A549 (cell line): ENCODE measurements at regions of chr15 and their contacts with region 1.

Region 1: DNA sequence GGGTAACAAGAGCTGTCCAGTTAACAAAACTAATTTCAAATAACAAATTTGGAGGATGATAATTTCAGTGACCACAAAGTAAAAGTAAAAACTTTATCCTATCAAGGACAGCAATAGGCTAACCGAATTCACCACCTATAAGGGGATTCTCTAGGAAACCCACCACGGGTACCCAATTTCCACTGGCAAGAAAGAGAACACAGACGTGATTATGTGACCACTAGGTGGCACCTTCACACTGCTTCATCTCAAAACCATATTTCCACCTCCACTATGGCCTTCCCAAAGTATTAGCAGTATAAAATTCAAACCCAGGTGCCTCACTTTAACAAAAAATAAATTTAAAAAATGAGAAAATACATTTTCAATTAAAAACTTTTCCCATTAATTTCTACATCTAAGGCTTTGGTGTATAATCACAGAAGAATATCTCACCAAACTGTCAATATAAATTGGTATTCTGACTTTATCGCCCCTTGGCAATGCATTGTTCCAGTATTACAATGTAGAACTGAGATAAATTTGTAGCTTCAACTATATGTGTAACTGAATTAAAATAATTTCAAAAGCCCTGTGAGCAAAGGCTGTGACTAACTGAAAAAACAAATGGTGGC is 96.5 kb downstream of the FSIP1 start:
- DNase-seq: peak; percentile 4 to 56
- ATAC-seq: peak in 1 of 2 experiments; percentile 72; a peak in 2 of 6 replicates
- H3K4me3 ChIP-seq: no peak overlapping the region
- H3K27ac ChIP-seq: no peak overlapping the region
- H3K4me1 ChIP-seq: no peaks in the 10 kb centered on the region
- CTCF ChIP-seq: peak; percentile 80
- EP300 ChIP-seq: no peak
- POLR2A ChIP-seq: no peak
- RAD21 ChIP-seq: peak; percentile 81 to 90

Region 2: DNA sequence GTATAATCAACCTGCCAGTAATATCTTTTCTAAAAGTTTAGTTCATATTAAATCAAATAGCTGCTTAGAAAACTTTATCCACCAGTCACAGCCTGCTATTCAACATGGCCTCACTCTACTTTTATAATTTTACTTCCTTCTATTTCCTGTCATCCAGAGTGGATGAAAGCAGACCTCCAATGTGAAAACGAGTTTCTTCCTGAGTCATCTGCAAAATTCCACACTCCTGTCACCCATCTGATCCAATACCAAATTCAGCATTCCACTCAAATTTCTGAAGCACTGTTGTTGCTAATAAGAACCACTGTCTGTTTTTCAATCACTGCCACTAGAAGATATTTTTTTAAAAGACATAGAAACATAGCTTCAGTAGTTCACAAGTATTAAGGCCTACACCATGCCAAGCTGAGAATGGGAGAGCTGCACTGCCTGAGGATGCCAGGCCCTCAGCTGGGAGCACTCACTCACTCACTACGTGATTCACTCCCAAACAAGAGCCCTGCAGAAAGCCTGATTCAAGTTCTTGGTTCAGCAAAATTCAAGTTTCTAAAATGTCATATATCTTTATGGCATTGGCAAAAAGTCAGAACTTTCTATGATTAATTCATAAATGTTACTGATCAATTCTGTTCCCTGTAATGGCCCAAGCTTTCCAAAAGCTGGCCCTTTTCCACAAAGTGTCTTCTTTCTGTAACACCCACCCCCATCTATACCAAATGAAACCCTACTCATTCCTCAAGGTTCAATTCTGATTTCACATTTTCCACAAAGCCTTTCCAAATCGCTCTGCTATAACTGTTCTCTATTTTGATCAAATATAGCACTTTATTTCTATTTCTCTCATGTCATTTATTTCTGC is 13.6 kb after region 1 on chr15:
- CTCF ChIA-PET with region 1: interaction called, 14 read pairs
- POLR2A ChIA-PET with region 1: no interaction called
- DNase-seq: no peak
- ATAC-seq: no peak
- H3K4me3 ChIP-seq: no peak overlapping the region
- H3K27ac ChIP-seq: no peak overlapping the region
- H3K4me1 ChIP-seq: no peaks in the 10 kb centered on the region
- CTCF ChIP-seq: no peak
- EP300 ChIP-seq: no peak
- POLR2A ChIP-seq: no peak
- RAD21 ChIP-seq: no peak

Region 3: DNA sequence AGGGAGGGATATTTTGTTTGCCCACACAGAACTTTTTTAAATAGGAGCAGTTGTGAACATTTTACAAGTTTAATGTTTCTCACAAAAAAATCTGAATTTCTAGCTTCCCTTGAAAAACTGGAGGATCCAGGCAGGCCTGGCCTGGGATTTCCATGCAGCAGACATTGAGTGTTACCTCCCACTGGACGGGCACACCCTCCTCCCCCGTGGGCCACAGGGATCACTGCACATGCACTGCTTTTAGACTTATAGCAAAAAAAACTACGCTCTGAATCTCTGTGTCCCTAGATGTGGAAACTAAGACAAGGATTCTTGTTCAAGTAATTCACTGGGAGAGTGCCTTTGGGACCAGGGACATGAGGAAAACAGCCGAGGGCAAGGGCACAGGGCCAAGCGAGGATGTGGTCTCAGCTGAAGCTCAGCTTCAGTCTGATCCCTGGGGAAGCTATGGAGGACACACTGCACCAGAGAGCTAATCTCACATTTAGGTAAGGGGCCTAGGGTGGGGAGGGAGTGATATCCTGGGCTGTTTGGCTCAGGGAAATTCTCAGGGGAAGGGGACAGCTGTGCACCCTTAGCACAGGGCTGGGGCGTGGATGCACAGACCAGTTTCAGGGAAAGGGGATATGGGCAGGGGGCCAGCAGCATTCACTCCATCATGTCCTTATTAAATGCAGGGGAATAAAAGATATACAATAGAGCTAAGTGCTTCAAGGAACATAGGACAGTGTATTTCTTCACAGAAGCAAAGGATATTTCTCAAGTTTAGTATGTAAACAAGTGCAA is 50.5 kb after region 1 on chr15:
- CTCF ChIA-PET with region 1: interaction called, 11 read pairs
- POLR2A ChIA-PET with region 1: no interaction called
- DNase-seq: no peak
- ATAC-seq: no peak
- H3K4me3 ChIP-seq: no peak overlapping the region
- H3K27ac ChIP-seq: peak overlapping the region in 1 of 2 experiments; percentile 50; a peak in 1 of 6 replicates
- H3K4me1 ChIP-seq: peaks cover 8% of the 10 kb centered on the region; the same call in 2 of the 3 replicates
- CTCF ChIP-seq: no peak
- EP300 ChIP-seq: no peak
- POLR2A ChIP-seq: no peak
- RAD21 ChIP-seq: no peak

Region 4: DNA sequence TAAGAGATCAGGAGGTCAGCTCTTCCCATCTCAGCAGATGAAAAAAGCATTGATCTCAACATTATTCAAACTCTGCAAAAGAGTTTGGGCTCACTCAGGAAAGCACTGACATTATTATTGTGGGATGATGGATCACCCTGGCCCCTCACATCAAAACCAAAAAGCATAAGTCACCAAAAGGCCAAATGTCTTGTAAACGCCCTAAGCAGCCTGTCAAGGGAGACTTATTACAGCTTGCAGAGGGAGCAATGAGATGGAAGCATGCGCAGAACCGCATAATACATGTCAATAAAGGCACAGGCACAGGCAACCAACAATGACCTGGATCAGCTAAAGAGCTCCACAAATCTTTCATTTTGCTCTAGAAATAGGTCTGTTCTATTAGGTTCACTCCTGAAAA is 91.9 kb after region 1 on chr15:
- CTCF ChIA-PET with region 1: no interaction called
- POLR2A ChIA-PET with region 1: no interaction called
- DNase-seq: no peak
- ATAC-seq: no peak
- H3K4me3 ChIP-seq: no peak overlapping the region
- H3K27ac ChIP-seq: no peak overlapping the region
- H3K4me1 ChIP-seq: no peaks in the 10 kb centered on the region
- CTCF ChIP-seq: no peak
- EP300 ChIP-seq: no peak
- POLR2A ChIP-seq: no peak
- RAD21 ChIP-seq: no peak